Prostate gland (tissue), 2 donors: ENCODE measurements at regions of chr20 and their contacts with region 1.

Region 1: DNA sequence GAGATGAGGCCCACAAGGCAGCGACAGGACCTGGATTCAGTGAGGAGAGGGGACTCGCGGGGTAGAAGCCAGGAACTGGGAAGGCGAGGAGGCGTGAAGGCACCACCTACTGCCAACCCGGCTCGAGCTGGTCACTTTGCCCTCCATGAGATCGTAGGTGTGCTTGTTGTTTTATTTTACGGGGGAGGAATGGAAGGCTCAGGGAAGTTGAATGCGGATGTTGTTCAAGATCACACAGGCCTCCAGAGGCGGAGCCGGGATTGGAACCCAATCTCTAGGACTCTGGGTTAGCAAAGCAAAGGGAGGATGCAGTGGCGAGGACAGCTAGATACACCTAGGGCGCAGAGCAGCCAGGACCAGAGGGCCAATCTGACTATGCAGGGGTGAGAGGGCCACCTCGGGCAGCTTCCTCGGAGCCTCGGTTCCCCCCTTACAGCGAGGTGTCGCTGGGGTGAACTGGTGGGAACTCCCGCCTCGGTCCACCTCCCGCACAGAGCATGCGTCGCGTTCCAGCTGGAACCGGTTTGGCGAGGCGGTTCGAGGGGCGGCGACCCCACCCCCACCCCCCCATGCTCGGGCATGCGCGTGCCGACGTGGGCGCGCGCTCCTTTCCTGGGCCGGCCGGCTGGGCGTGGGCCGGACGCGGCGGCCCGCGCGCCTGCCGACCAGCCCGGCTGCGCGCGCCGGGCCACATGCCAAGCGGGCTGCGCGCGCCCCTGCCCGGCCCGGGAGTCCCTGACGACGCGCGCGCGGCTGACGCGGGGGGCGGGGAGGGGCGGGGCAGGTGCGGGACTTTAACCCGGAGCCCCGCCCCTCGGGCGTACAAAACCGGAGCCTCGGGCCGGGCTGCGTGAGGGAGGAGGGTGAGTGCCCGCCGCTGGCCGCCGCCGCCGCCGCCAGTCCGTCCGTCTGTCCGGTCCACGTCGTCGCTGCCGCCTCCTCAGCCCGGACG is 80.4 kb upstream of the MYL9 start:
- DNase-seq: peak; percentile 93
- H3K4me3 ChIP-seq: peak overlapping the region; percentile 54 to 77
- H3K27ac ChIP-seq: peak overlapping the region; percentile 94 to 95
- H3K4me1 ChIP-seq: peaks cover 6% of the 10 kb centered on the region
- H3K27me3 ChIP-seq: no peaks in the 10 kb centered on the region
- CTCF ChIP-seq: peak in 2 of 4 experiments; percentile 28 to 30
- POLR2A ChIP-seq: peak; percentile 94

Region 2: GRCh38 chr20:36527331-36528125 is 66.6 kb after region 1 on chr20:
- intact Hi-C with region 1: loop called (anchors 5 kb)
- DNase-seq: no peak
- H3K4me3 ChIP-seq: no peak overlapping the region
- H3K27ac ChIP-seq: no peak overlapping the region
- H3K4me1 ChIP-seq: no peaks in the 10 kb centered on the region
- H3K27me3 ChIP-seq: no peaks in the 10 kb centered on the region
- CTCF ChIP-seq: no peak
- POLR2A ChIP-seq: no peak

Region 3: DNA sequence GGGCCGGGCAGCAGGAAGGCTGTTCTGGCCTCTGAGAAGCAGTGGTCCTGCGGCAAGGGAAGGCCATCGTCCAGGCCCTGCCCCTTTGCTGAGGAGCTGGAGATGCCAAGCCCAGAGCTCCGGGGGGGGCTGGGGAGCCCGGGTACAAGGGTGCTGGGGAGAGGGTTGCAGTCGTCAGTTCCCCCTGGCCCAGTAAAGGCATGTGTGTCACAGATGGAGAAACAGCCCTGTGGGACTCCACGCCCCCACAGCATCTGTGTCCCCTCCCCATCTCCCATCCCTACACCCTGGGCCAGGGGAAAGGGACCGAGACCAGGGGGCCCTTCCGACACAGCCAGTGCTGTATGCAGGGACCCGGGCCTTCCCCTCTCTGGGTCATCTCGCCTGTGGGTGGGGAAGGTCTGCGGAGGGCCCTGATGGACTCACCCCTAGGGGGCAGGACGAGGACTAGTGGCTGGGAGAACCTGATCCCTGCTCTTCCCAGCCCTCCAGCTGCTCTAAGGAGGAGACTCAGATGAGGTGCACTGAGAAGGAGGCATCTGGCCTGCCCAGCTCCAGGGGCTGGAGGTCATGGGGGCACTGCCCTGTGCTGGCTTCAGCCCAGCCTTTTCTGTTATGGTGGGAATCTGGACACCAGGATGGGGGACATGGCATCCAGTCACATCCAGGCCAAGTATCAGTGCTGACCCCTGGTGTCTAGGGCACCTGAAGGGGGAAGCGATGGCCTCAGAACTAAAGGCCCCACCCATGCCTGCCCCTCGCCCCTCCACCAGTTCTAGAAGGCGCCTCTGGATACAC is 81.0 kb after region 1 on chr20:
- intact Hi-C with region 1: loop called (anchors 2 kb)
- DNase-seq: no peak
- H3K4me3 ChIP-seq: peak overlapping the region; percentile 45 to 68
- H3K27ac ChIP-seq: peak overlapping the region; percentile 81 to 95
- H3K4me1 ChIP-seq: no peaks in the 10 kb centered on the region
- H3K27me3 ChIP-seq: no peaks in the 10 kb centered on the region
- CTCF ChIP-seq: peak in 3 of 4 experiments; percentile 15 to 55 (median 49)
- POLR2A ChIP-seq: no peak

Region 4: DNA sequence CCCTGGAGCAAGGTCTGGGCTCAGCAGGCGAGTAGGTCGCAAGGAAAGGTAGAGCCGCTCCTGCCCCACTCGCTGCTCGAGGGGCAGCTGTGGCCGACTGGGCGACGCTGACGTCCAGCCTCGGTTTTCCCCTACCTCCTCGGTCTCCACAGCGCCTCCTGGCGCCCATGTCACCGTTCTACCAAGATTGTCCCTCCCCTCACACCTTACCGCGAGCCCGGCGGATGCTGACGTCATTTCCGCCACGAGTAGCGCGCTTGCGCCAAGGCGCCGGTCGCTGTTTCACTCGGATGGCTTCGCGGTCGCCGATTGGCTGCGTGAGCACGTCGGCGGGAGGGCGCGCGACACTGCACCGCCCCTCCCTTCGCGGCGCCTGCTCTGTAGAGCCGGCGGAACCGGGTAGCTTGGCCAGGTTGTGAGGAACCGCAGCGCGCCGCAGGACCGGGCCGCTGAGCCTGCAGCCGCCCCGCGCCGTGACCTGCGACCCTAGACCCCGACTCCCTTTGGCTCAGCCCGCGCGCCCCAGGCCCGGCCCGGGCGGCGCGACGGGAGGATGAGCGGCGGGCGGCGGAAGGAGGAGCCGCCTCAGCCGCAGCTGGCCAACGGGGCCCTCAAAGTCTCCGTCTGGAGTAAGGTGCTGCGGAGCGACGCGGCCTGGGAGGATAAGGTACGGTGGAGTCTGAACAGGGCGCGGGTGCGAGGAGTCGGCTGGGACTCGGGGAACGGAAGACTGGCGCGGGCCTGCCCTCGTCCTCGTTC is 144.7 kb after region 1 on chr20 and contains the start of gene RAB5IF:
- intact Hi-C with region 1: loop called (anchors 10 kb)
- DNase-seq: peak; percentile 97
- H3K4me3 ChIP-seq: peak within 1 kb of the TSS; percentile 95 to 96
- H3K27ac ChIP-seq: peak within 1 kb of the TSS; percentile 77 to 78
- H3K4me1 ChIP-seq: peaks cover 6% of the 10 kb centered on the region
- H3K27me3 ChIP-seq: no peaks in the 10 kb centered on the region
- CTCF ChIP-seq: peak; percentile 78 to 100 (median 97)
- POLR2A ChIP-seq: peak; percentile 79
- total RNA-seq, gene RAB5IF: 72.8 to 92.3 TPM